RWPE1 (cell line): ENCODE measurements at regions of chr7 and their contacts with region 1.

Region 1: GRCh38 chr7:98021588-98022351 is 31.8 kb upstream of the OCM2 start:
- DNase-seq: peak; percentile 82
- H3K27ac ChIP-seq: no peak overlapping the region
- CTCF ChIP-seq: peak; percentile 96

Region 2: DNA sequence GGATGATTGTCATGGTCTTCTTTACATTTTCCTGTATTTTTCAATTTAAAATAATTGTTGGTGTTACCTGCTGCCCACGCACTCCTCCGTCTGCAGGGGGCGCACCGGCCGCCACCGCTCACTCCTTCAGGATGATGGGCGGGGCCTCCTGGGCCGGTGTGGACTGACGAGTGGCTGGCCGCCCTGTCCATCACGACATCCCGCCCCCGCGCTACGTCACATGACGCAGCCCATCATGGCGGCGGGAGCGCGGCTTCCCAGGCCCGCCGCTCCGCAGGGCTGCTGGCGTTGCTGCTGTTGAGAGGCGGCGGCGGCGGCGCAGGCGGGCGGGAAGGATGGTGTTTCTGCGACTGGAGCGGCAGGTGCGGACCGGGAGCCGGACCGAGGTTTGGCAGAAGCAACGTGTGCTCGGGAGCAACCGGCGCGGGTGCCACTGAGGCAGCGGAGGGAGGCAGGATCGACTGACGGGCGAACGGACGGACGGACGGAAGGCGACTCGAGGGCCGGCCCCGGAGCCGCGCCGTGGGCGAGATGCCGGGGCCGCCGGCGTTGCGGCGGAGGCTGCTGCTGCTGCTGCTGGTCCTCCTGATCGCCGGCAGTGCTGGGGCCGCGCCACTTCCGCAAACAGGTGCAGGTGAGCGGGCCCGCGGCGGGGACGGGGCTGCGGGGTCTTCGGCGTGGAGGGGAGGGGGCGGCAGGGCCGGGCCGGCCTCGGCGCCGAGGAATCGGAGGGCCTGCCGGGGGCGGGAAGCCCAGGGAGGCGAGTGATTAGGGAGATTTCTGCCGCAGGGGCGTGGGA is 85.1 kb after region 1 on chr7 and contains the start of gene LMTK2:
- CTCF ChIA-PET with region 1: interaction called, 20 read pairs
- POLR2A ChIA-PET with region 1: no interaction called
- DNase-seq: peak; percentile 98
- H3K27ac ChIP-seq: peak within 1 kb of the TSS; percentile 65
- CTCF ChIP-seq: peak; percentile 99

Region 3: DNA sequence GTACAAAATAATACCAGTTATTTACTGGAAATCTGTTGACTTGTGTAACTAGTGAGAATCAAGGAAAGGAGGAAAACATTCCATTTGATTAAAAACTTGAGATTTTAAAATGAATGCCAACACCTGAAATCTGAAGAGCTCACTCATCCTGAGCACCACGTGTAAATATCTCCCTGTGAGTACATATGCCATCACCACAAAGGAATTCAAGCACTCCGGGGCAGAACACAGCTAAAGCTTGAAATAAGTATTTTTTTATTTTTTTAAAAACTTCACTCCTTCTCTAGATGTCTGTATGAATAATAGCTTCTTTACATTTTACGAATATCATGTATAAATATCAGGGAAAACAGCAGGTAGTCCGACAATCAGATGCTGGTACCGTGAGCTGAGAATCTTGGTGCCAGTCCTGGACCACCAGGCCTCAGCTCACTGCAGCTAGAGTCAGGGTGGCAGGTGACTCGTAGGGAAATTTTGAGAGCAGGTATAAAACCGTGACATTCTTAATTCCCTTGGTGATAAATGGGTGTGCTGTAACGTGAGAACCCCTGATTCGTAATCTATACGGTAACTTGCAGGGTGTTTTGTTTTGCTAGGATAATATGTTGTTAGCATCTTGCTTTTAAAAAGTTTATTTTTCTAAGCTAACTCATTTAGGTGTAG is 97.6 kb after region 1 on chr7:
- CTCF ChIA-PET with region 1: interaction called, 12 read pairs
- POLR2A ChIA-PET with region 1: no interaction called
- DNase-seq: peak; percentile 86
- H3K27ac ChIP-seq: peak overlapping the region; percentile 68
- CTCF ChIP-seq: no peak

Region 4: GRCh38 chr7:98133181-98133580 is 111.4 kb after region 1 on chr7:
- CTCF ChIA-PET with region 1: interaction called, 10 read pairs
- POLR2A ChIA-PET with region 1: interaction called, 3 read pairs
- DNase-seq: no peak
- H3K27ac ChIP-seq: no peak overlapping the region
- CTCF ChIP-seq: no peak

Region 5: GRCh38 chr7:98168181-98168905 is 146.6 kb after region 1 on chr7:
- CTCF ChIA-PET with region 1: interaction called, 202 read pairs
- POLR2A ChIA-PET with region 1: interaction called, 3 read pairs
- DNase-seq: peak; percentile 91
- H3K27ac ChIP-seq: no peak overlapping the region
- CTCF ChIP-seq: peak; percentile 96

Region 6: GRCh38 chr7:98378210-98378819 is 356.5 kb after region 1 on chr7:
- CTCF ChIA-PET with region 1: no interaction called
- POLR2A ChIA-PET with region 1: no interaction called
- DNase-seq: no peak
- H3K27ac ChIP-seq: peak overlapping the region; percentile 42
- CTCF ChIP-seq: no peak